ENCODE measurements at regions of chr2 and their contacts with region 1.

Region 1: DNA sequence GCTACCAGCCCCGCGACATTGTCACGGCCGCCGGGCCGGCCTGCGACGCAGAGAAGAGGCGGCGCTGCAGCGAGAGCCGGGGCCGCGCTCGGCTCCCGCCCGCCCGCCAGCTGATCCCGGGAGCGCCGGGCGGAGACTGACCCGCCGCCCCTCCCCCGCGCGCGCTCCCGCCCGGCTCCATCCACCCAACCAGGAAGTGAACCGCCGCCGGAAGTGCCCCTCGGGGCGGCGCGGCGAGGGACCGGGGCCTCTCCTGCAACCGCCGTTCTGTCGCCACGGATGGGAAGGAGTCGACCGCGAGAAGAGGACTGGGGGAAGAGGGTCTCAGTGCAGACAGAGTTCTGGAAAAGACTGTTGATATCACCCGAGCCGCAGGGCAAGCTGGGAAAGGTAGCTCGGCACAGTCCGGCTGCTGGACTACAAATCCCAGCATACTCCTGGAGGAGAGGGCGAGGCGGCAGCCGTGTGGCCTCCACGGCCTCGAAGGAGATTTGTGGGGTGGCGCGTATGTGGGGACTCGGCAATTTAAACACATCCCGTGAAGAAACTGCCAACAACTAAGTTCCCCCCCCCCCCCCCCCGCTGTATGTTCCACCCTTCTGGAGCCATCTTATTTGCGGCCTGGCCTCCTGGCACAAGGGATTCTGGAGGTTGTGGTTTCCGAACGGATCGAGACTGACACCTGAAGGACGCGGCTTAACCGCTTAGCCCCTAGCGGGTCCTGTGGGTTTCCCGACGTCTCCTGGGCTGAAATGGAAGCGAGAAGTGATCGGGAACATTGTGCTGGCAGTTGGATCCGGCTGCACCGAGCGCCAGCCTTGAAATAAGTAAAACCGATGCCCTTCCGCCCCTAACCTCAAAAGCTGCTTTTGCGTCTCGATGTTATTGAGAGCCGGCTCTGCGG is at the start of gene AAK1:
- DNase-seq: peak; percentile 70 to 90 (median 83)
- ATAC-seq: peak; percentile 41 to 50
- H3K4me3 Mint-ChIP-seq: peak within 1 kb of the TSS; percentile 89 to 99 (median 96)
- H3K27ac Mint-ChIP-seq: peak within 1 kb of the TSS; percentile 94 to 99 (median 97)
- H3K4me1 Mint-ChIP-seq: peaks cover 38 to 73% (median 63%) of the 10 kb centered on the region in 4 donors
- H3K27me3 Mint-ChIP-seq: no peaks in the 10 kb centered on the region
- polyA plus RNA-seq, gene AAK1: 59.8 to 106 (median 97.3) TPM

Region 2: DNA sequence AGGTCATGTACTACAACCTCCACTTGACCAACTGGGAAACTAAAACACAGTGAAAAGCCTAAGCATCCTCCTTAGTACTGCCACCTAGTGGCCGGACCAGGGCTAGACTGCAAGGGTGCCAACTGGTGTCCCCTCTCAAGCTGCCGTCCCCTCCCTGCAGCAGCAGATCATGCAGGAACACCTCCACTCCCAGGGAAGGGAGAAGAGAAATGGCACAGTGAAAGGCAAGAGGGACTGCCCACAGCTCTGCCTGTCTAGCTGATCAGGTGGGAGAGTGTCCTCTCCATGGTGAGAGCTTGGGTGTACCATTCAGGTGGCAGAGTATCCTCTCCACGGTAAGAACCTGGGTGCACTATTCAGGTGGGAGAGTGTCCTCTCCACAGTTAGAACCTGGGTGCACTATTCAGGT is 78.4 kb before region 1 on chr2:
- POLR2A ChIA-PET with region 1: interaction called, 23 read pairs
- DNase-seq: peak; percentile 40 to 78 (median 59)
- ATAC-seq: peak; percentile 77 to 86
- H3K4me3 Mint-ChIP-seq: peak overlapping the region in 9 of 10 donors; percentile 45 to 76 (median 68)
- H3K27ac Mint-ChIP-seq: peak overlapping the region; percentile 41 to 89 (median 82)
- H3K4me1 Mint-ChIP-seq: peaks cover 58 to 100% (median 92%) of the 10 kb centered on the region in 4 donors
- H3K27me3 Mint-ChIP-seq: no peaks in the 10 kb centered on the region

Region 3: DNA sequence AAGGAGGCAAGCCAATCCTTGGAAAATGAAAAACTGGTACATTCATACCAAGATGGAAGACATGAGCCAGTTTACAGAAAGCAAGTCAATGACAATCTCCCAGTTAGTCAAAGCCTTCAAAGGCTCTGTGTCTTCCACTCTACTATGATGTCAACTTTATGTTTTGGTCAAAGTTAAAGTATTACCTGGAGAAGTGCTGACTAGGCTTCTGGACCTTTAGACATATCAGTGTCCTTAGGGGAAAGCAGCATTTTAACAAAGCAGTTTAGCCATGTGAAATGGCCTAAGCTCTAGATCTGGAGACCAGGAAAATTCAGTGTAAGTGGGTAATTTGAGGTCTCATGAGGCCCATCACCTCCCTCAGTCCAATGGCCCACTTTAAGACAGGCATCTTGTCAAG is 31.1 kb before region 1 on chr2:
- POLR2A ChIA-PET with region 1: interaction called, 39 read pairs
- DNase-seq: no peak
- ATAC-seq: no peak
- H3K4me3 Mint-ChIP-seq: peak overlapping the region in 2 of 10 donors; percentile 22 to 27
- H3K27ac Mint-ChIP-seq: peak overlapping the region; percentile 1 to 76 (median 48)
- H3K4me1 Mint-ChIP-seq: peaks cover 31 to 77% (median 70%) of the 10 kb centered on the region in 4 donors
- H3K27me3 Mint-ChIP-seq: no peaks in the 10 kb centered on the region

Region 4: DNA sequence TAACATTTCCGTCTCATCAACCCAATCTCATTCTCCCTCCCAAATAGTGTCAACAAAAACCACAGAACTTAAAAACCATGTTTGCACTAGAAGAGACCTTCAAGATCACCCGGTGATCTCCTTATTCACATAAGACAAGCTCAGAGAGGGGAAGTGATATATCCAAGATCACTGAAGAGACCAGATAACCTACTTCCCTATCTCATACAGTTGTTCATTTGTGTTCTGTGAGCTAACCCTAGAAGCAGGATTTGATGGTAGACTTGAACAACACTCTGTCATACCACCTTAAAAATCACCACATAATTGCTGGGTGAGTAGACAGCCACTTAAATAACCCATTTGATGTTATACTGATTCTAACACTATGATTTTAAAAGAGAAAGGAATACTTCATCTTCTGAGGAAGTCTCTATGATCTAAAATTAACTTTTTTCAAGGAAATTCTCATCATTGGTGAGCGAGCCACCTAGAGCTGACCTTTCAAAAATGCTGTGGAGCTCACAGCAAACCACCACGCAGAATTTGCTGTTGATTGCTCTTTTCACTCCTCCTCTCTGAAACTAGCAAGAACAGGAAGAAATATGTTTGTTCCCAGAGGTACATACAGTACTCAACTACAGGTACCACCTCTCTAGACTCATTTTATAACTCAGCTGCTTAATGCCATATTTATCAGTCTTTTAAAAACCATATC is 15.4 kb before region 1 on chr2:
- POLR2A ChIA-PET with region 1: interaction called, 39 read pairs
- DNase-seq: peak in 1 of 10 donors; percentile 33
- ATAC-seq: peak; percentile 56 to 71
- H3K4me3 Mint-ChIP-seq: no peak overlapping the region
- H3K27ac Mint-ChIP-seq: peak overlapping the region in 1 of 10 donors; percentile 69
- H3K4me1 Mint-ChIP-seq: peaks cover 12 to 35% (median 23%) of the 10 kb centered on the region in 4 donors
- H3K27me3 Mint-ChIP-seq: no peaks in the 10 kb centered on the region

Region 5: GRCh38 chr2:69683101-69683971 is 39.5 kb after region 1 on chr2:
- POLR2A ChIA-PET with region 1: interaction called, 19 read pairs
- DNase-seq: no peak
- ATAC-seq: peak; percentile 40 to 47
- H3K4me3 Mint-ChIP-seq: peak overlapping the region; percentile 10 to 74 (median 52)
- H3K27ac Mint-ChIP-seq: peak overlapping the region; percentile 53 to 92 (median 82)
- H3K4me1 Mint-ChIP-seq: peaks cover 39 to 71% (median 64%) of the 10 kb centered on the region in 4 donors
- H3K27me3 Mint-ChIP-seq: no peaks in the 10 kb centered on the region

Region 6: GRCh38 chr2:69716555-69717114 is 72.8 kb after region 1 on chr2:
- POLR2A ChIA-PET with region 1: interaction called, 51 read pairs
- DNase-seq: no peak
- ATAC-seq: no peak
- H3K4me3 Mint-ChIP-seq: no peak overlapping the region
- H3K27ac Mint-ChIP-seq: peak overlapping the region in 4 of 10 donors; percentile 29 to 60 (median 36)
- H3K4me1 Mint-ChIP-seq: peaks cover 11 to 23% (median 20%) of the 10 kb centered on the region in 4 donors
- H3K27me3 Mint-ChIP-seq: no peaks in the 10 kb centered on the region

Region 7: GRCh38 chr2:69762513-69763497 is 119.0 kb after region 1 on chr2:
- POLR2A ChIA-PET with region 1: no interaction called
- DNase-seq: no peak
- ATAC-seq: no peak
- H3K4me3 Mint-ChIP-seq: no peak overlapping the region
- H3K27ac Mint-ChIP-seq: no peak overlapping the region
- H3K4me1 Mint-ChIP-seq: peaks cover 8 to 41% (median 14%) of the 10 kb centered on the region in 4 donors
- H3K27me3 Mint-ChIP-seq: no peaks in the 10 kb centered on the region